Natural killer cell (primary cell): ENCODE measurements at regions of chr17 and their contacts with region 1.

Region 1: GRCh38 chr17:64345696-64346376 is 44.8 kb downstream of the PECAM1 start:
- DNase-seq: no peak
- ATAC-seq: no peak
- H3K4me3 ChIP-seq: no peak overlapping the region
- H3K4me3 Mint-ChIP-seq: no peak overlapping the region
- H3K27ac ChIP-seq: no peak overlapping the region
- H3K27ac Mint-ChIP-seq: no peak overlapping the region
- H3K4me1 ChIP-seq: peaks cover 51% of the 10 kb centered on the region
- H3K4me1 Mint-ChIP-seq: peaks cover 11 to 12% of the 10 kb centered on the region in 2 donors
- H3K27me3 ChIP-seq: no peaks in the 10 kb centered on the region
- H3K27me3 Mint-ChIP-seq: no peaks in the 10 kb centered on the region
- CTCF ChIP-seq: no peak

Region 2: DNA sequence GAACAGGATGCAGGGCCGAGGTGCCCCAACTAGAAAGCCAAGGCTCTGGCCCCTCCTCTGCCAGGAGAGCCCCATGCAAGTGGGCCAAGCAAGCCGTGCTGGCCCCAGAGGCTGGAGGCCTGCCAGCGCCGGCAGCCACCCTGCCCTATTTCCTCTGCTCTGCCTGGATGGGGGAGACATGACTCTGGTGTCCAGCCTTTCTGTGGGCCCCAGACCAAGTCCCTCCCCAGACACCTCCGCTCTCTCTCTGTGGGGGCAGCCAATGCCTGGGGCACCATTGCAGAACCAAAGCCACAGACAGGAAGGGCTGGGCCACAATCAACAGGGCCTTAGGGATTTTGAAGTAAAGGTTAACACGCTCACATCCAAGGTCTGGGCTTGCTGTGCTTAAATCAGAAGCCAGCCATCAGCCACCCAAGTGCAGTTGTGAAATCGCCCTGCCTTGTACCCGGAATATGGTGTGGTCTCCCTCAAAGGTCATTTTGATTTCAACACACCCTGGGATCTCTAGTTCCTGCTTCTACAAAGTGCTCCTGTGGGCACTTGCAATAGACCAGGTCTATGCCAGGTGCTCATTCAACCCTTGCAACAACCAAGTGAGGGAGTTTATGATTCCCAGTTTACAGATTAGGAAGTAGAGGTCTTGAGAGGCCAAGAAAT is 19.3 kb before region 1 on chr17:
- intact Hi-C with region 1: no loop called
- DNase-seq: no peak
- ATAC-seq: peak; percentile 21 to 49 (median 48)
- H3K4me3 ChIP-seq: no peak overlapping the region
- H3K4me3 Mint-ChIP-seq: peak overlapping the region; percentile 35
- H3K27ac ChIP-seq: peak overlapping the region; percentile 4
- H3K27ac Mint-ChIP-seq: peak overlapping the region; percentile 32 to 71
- H3K4me1 ChIP-seq: peaks cover 22% of the 10 kb centered on the region
- H3K4me1 Mint-ChIP-seq: peaks cover 41 to 42% of the 10 kb centered on the region in 2 donors
- H3K27me3 ChIP-seq: no peaks in the 10 kb centered on the region
- H3K27me3 Mint-ChIP-seq: no peaks in the 10 kb centered on the region
- CTCF ChIP-seq: no peak

Region 3: DNA sequence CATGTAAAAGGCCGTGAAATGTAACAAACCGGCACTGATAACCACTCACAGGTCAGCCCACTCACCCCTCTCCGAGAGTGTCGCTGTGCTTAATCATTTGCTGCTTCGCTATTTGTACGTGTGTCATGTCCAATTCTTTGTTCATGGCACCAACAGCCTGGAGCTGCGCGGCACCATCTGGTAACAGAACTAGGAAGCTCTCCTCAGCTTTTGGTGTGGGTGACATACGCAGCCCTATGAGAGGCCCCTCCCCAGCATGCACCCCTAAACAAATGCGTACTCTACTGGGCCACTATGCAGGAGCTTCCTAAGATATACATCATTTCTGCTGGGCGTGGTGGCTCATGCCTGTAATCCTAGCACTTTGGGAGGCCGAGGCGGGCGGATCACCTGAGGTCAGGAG is 47.2 kb after region 1 on chr17:
- intact Hi-C with region 1: loop called (anchors 5 kb)
- DNase-seq: peak in 1 of 2 donors; percentile 65
- ATAC-seq: peak; percentile 43 to 68 (median 68)
- H3K4me3 ChIP-seq: no peak overlapping the region
- H3K4me3 Mint-ChIP-seq: peak overlapping the region; percentile 84
- H3K27ac ChIP-seq: peak overlapping the region; percentile 53
- H3K27ac Mint-ChIP-seq: peak overlapping the region; percentile 58 to 93
- H3K4me1 ChIP-seq: peaks cover 56% of the 10 kb centered on the region
- H3K4me1 Mint-ChIP-seq: peaks cover 61% of the 10 kb centered on the region in 2 donors
- H3K27me3 ChIP-seq: no peaks in the 10 kb centered on the region
- H3K27me3 Mint-ChIP-seq: no peaks in the 10 kb centered on the region
- CTCF ChIP-seq: no peak